ENCODE measurements at regions of chr12 and their contacts with region 1.

Region 1: GRCh38 chr12:50167041-50167828 is at the start of gene CERS5:
- DNase-seq: peak; percentile 98 to 100
- H3K4me3 ChIP-seq: peak within 1 kb of the TSS; percentile 85 to 98
- H3K27ac ChIP-seq: peak within 1 kb of the TSS; percentile 98 to 99
- H3K4me1 ChIP-seq: peaks cover 0 to 14% of the 10 kb centered on the region in 2 donors
- H3K27me3 ChIP-seq: no peaks in the 10 kb centered on the region
- CTCF ChIP-seq: peak in 2 of 3 experiments; percentile 12 to 28
- total RNA-seq, gene CERS5: 29.7 TPM

Region 2: DNA sequence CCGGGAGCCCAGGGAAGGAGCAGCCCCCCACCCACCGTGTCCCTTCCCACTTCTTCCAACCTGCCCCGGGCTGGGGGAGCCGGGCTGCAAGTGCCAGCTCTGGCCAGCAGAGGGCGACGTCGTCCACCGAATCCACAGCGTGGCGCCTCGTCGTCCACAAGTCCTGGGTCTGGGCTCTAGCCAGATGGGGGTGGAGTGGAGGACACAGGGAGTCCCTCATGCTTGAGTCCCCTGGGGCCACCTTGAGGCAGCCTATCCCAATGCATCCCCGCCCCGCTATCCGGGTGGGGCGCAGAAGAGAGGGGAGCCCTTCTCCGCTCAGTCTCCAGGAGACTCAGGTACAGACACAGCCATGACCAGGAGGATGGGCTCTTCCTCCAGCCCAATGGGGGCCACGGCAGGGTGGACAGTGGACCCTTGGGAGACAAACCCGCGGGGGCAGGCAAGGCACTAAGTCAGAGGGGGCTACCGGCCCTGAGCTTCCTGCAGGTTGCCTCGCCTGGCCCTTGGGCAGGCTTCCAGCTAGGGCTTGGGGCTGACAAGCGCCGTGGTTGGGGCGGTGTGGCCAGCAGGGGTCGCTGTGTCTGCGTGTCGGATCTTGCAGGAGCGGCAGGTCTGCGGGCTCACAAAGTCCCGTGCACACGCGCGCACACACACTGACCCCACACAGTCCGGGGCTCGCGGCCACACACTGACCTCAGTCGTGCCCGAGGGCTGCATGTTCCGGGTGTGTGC is 200.0 kb before region 1 on chr12:
- intact Hi-C with region 1: loop called (anchors 10 kb)
- DNase-seq: peak; percentile 36 to 91
- H3K4me3 ChIP-seq: peak overlapping the region; percentile 44 to 51
- H3K27ac ChIP-seq: no peak overlapping the region
- H3K4me1 ChIP-seq: peaks cover 0 to 17% of the 10 kb centered on the region in 2 donors
- H3K27me3 ChIP-seq: no peaks in the 10 kb centered on the region
- CTCF ChIP-seq: peak; percentile 76 to 95 (median 83)

Region 3: DNA sequence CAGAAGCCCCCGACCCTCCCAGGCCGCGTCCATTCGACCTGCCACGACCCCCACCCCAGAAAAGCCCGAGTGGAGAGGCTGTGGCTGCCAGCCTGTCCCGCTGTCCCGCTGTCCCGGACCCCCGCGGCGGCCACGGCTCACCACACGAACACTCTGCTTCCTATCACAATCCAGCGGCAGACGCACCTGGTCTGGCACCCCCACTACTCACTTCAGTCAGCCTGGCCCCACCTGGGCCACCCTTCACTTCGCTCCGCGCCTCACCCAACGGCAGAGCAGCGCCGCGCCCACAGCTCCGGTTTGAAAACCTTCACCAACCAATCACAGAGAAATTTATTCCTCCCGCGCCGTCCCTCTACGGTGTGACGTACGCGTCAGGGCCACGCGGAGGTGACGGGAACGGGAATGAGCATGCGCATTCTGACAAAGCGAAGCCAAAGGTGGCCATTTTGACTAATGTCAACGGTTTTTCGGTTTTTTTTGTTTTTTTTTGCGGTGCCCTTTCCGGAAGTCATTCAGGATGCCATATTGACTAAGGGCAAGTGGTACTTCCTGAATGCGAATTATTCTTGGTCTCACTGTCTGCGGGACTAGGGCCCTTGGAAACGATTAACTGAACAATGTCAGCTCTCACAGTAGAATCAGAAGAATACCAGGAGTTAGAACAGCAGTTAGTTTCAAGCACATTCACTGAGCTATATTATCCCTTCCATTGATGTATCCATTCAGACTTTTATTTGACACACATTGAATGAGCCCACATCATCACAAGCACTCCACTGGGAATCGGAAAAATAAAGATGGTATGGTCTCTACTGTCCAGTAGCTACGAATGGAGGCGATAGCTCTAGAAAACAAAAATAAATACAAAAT is 141.8 kb before region 1 on chr12 and contains the start of gene RACGAP1:
- intact Hi-C with region 1: loop called (anchors 1 kb)
- DNase-seq: peak; percentile 86 to 97
- H3K4me3 ChIP-seq: peak within 1 kb of the TSS; percentile 66 to 69
- H3K27ac ChIP-seq: peak within 1 kb of the TSS in 1 of 2 donors; percentile 13
- H3K4me1 ChIP-seq: no peaks in the 10 kb centered on the region
- H3K27me3 ChIP-seq: no peaks in the 10 kb centered on the region
- CTCF ChIP-seq: no peak
- total RNA-seq, gene RACGAP1: 5.1 TPM

Region 4: DNA sequence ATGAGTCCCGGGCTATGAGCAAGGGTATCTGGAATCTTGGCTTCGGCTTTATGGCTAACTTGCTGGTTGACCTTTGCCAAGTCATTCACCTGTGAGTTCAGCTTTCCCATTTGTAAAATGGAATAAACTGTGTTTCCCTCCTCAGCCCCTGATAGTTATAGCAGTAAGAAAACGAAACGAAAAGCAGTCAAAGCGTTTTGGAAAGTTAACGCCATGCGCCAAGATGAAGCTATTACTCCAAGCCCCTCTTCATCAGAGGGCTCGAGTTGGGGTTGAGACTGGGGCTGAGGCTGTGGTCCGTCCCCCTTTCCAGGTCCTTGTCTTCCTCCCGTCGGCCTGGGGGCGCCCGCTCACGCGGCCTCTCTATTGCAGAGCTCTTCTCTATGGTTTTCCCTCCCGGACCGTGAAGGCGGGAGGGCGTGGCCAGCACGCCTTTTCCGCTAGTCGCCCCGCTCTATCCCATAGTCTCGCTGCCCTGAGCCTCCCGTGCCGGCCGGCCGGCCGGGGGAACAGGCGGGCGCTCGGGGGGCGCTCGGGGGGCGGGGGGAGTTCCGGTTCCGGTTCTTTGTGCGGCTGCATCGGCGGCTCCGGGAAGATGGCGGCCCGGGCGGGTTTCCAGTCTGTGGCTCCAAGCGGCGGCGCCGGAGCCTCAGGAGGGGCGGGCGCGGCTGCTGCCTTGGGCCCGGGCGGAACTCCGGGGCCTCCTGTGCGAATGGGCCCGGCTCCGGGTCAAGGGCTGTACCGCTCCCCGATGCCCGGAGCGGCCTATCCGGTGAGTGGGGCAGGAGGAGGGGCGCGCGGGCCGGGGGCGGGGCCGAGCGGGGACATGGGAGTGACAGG is 82.2 kb before region 1 on chr12 and contains the start of gene SMARCD1:
- intact Hi-C with region 1: loop called (anchors 1 kb)
- DNase-seq: peak; percentile 66 to 94
- H3K4me3 ChIP-seq: peak within 1 kb of the TSS; percentile 83 to 85
- H3K27ac ChIP-seq: peak within 1 kb of the TSS; percentile 97 to 98
- H3K4me1 ChIP-seq: peaks cover 3 to 9% of the 10 kb centered on the region in 2 donors
- H3K27me3 ChIP-seq: no peaks in the 10 kb centered on the region
- CTCF ChIP-seq: peak in 2 of 3 experiments; percentile 49 to 62
- total RNA-seq, gene SMARCD1: 277 TPM

Region 5: DNA sequence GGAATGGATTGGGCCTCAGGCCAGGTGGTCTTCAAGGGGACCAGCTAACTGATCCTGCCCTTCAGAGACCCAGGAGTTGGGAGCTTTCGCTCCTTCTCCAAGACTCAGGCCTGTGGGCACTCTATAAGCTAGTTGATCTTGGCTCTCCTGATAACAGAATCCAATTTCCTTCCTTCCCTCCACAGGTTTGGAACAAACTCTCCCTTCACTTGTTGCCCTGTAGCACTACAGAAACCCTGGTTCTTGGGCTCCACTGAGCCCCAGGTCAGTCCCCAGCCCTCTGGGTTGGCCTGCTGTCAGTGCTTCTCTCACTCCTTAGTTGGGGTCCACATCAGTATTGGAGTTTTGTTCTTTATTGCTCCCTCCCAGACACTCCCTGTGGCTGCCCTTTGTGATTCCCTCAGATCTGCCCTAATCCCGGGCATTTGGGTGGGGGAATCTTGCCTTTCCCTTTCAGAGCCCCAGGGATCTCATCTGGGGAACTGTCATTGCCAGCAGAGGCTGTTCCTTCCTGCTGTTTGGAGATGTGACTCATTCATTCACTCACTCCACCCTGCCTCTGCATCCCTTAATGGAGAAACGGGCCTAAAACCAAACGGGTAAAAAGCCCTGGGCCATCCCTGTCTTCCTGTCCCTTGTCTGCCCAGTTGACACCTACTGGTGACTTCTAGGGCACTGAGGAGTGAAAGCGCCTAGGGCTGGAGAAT is 67.8 kb before region 1 on chr12:
- intact Hi-C with region 1: no loop called
- DNase-seq: no peak
- H3K4me3 ChIP-seq: no peak overlapping the region
- H3K27ac ChIP-seq: peak overlapping the region in 1 of 2 donors; percentile 29
- H3K4me1 ChIP-seq: peaks cover 6% of the 10 kb centered on the region in 2 donors
- H3K27me3 ChIP-seq: no peaks in the 10 kb centered on the region
- CTCF ChIP-seq: no peak

Region 6: GRCh38 chr12:50111693-50112455 is 55.4 kb before region 1 on chr12 and contains the start of gene COX14:
- intact Hi-C with region 1: loop called (anchors 1 kb)
- DNase-seq: peak; percentile 98 to 100
- H3K4me3 ChIP-seq: peak within 1 kb of the TSS; percentile 83 to 94
- H3K27ac ChIP-seq: peak within 1 kb of the TSS; percentile 96 to 98
- H3K4me1 ChIP-seq: peaks cover 22 to 40% of the 10 kb centered on the region in 2 donors
- H3K27me3 ChIP-seq: no peaks in the 10 kb centered on the region
- CTCF ChIP-seq: peak in 2 of 3 experiments; percentile 97 to 98
- total RNA-seq, gene COX14: 19.8 TPM

Region 7: DNA sequence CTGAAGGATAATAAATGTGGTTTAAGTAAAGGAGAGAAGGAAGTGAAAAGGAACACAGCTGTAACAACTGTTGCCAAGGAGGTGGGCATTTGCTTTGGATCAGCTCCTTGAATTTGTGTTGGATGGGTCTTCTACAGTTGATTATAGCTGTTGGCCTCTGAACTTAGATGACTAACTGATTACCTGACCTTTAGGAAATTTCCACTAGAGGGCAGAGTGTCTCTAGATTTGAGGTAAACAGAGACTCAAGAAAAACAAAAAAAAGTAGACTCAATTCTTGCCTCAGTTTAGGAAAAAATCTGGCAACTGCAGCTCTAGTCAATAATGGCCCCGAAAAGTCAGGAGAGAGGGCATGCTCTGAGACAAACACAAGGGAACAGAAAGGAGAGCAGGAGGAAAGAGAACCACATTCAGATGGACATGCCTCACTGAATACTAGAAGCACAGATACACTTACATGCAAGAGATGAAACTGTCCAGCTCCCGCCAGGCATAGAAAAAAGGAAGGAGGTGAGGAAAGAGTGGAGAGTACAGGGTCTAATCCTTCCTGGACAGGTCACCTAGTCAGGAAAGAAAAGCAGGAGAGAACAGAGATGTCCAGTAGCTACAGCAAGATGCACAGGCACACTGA is 34.6 kb before region 1 on chr12:
- intact Hi-C with region 1: loop called (anchors 5 kb)
- DNase-seq: no peak
- H3K4me3 ChIP-seq: no peak overlapping the region
- H3K27ac ChIP-seq: peak overlapping the region; percentile 48 to 53
- H3K4me1 ChIP-seq: peaks cover 7 to 8% of the 10 kb centered on the region in 2 donors
- H3K27me3 ChIP-seq: no peaks in the 10 kb centered on the region
- CTCF ChIP-seq: no peak

Region 8: GRCh38 chr12:50400598-50401364 is 233.5 kb after region 1 on chr12 and contains the start of gene LARP4:
- intact Hi-C with region 1: loop called (anchors 2 kb)
- DNase-seq: peak; percentile 76 to 95
- H3K4me3 ChIP-seq: peak within 1 kb of the TSS; percentile 76 to 80
- H3K27ac ChIP-seq: peak within 1 kb of the TSS; percentile 86 to 91
- H3K4me1 ChIP-seq: peaks cover 0 to 12% of the 10 kb centered on the region in 2 donors
- H3K27me3 ChIP-seq: no peaks in the 10 kb centered on the region
- CTCF ChIP-seq: peak in 1 of 3 experiments; percentile 7
- total RNA-seq, gene LARP4: 45.7 TPM